A549 (cell line): ENCODE measurements at regions of chr6 and their contacts with region 1.

Region 1: DNA sequence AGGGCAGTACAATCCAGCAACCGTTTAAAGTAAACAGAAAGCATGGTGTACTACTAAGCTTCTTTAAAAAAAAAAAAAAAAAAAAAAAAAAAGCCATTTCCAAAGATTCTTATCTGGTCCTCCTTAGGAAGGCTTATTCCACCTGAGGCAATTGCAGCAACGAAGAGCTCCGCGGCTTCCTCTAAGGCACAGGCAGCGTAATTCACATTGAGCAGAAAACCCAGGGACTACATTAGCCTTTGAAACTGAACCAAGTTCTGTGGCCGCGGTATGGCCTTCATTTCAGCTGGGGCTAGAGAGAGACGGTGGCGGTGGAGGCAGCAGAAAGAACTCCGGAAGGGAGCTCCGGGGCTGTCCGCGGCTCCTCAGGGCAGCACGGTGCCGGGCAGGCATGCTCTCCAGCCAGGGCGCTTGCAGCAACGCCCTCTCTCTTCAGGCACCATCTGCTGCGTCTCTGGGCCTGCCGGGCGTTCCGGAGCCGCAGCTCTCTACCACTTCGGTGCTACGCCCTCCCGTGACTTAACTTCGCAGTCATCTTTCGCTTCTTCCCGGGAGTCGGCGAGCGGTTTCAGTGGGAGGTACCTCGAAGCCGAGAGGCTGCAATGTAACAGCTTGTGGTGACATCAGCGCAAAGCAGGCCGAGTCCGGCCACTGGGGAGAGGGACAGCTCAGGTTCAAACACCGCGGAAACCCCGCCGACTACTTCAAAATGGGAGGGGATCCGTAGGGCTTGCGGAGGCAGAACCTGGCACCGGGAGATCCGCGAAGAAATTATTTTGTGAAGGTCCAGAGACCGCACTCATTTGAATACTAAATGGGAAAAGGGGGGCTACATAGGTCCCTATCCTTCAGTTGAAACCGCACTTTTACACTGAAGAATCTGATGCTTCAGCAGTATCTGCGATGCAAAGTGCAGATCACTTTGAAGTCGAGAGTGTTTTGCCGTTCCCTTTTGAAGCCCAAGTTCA is 100.0 kb downstream of the DST start:
- DNase-seq: peak; percentile 57 to 93
- ATAC-seq: peak; percentile 99
- H3K4me3 ChIP-seq: peak overlapping the region; percentile 46
- H3K27ac ChIP-seq: peak overlapping the region; percentile 73 to 92
- H3K4me1 ChIP-seq: peaks cover 52% of the 10 kb centered on the region
- CTCF ChIP-seq: no peak
- EP300 ChIP-seq: no peak
- POLR2A ChIP-seq: peak; percentile 47
- RAD21 ChIP-seq: peak in 1 of 2 experiments; percentile 32; a peak in 2 of 5 replicates

Region 2: DNA sequence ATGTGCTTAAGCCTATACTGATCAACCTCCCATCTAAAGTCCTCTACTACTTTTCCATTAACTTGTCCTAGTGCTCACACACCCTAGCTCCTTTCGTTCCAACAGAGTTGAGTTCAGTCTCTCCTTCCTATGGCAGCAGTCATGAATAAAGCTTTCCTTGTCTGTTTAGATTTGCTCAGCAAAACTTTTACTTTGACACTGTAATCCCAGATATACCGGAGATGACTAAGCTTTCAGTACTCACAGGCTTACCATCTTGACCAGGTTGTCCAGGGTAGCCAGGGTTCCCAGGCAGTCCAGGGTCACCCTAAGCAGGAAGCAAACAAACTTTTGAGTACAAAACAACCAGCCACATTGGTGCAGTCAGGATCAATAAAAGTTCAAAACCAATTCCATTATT is 386.0 kb before region 1 on chr6:
- CTCF ChIA-PET with region 1: no interaction called
- POLR2A ChIA-PET with region 1: no interaction called
- DNase-seq: peak in 1 of 2 experiments; percentile 21
- ATAC-seq: no peak
- H3K4me3 ChIP-seq: no peak overlapping the region
- H3K27ac ChIP-seq: no peak overlapping the region
- H3K4me1 ChIP-seq: 0 out of 3 replicates have a peak, but pooled peaks cover 5% of the 10 kb centered on the region
- CTCF ChIP-seq: no peak
- EP300 ChIP-seq: no peak
- POLR2A ChIP-seq: no peak
- RAD21 ChIP-seq: no peak

Region 3: DNA sequence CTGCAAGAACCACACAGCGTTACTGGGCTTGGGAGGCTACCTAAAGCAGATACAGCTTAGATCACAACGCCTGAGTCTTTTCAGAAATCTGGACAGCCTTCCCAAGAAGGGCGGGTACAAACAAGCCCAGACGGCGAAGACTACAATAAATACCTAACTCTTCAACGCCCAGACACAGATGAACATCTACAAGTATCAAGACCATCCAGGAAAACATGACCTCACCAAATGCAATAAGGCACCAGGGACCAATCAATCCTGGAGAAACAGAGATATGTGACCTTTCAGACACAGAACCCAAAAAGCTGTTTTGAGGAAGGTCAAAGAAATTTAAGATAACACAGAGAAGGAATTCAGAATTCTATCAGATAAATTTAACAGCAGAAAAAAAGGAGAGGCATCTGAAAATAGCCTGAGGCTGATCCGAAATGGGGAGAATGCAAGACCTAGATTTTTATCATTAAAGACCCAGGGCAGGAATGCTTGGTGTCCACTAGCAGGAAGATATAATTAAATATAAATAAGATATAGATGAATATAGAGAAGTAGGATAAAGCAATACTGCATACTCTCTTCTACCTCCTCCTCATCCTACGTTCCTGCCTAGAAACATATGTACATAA is 163.5 kb before region 1 on chr6:
- CTCF ChIA-PET with region 1: no interaction called
- POLR2A ChIA-PET with region 1: no interaction called
- DNase-seq: no peak
- ATAC-seq: no peak
- H3K4me3 ChIP-seq: no peak overlapping the region
- H3K27ac ChIP-seq: no peak overlapping the region
- H3K4me1 ChIP-seq: no peaks in the 10 kb centered on the region
- CTCF ChIP-seq: no peak
- EP300 ChIP-seq: no peak
- POLR2A ChIP-seq: no peak
- RAD21 ChIP-seq: no peak

Region 4: DNA sequence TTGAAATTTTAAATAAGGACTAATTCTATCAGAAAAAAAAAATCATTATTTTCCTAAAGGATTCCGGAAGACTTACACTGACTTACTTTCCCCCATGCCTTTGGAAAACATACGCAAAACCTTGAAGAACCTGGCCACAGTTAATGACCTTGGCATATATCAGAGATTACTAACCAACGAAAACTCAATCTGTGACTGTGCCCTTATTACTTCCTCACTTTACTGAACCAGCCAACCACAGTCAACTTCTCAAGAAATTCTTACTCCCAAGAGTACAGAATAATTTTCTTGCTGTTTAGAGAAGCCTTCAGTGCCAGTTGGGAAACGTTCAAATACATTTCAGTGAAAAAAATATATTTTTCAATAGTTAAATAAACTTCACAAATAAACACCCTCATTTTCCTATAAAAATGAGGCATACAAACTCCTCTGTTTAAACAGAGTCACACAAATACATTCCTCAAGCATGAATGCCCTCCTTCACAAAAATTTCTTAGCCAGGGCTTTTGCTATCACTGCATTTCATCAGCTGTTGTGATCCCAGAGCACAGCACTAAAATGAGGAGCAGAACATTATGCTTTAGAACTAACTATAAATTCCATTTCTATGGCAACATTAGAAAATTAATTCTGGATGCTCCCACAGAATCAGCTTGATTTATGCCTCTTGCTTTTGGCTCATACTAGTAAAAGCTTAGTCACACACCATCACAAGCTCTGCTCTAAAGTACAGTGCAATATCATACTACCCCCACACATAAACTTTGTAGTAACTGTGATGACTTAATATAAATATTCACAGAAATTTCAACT is 17.6 kb before region 1 on chr6:
- CTCF ChIA-PET with region 1: interaction called, 5 read pairs
- POLR2A ChIA-PET with region 1: interaction called, 20 read pairs
- DNase-seq: peak in 1 of 2 experiments; percentile 9
- ATAC-seq: peak; percentile 82 to 83
- H3K4me3 ChIP-seq: no peak overlapping the region
- H3K27ac ChIP-seq: peak overlapping the region; percentile 56 to 70
- H3K4me1 ChIP-seq: peaks cover 51% of the 10 kb centered on the region
- CTCF ChIP-seq: no peak
- EP300 ChIP-seq: peak in 1 of 2 experiments; percentile 20; a peak in 1 of 5 replicates
- POLR2A ChIP-seq: no peak
- RAD21 ChIP-seq: no peak

Region 5: DNA sequence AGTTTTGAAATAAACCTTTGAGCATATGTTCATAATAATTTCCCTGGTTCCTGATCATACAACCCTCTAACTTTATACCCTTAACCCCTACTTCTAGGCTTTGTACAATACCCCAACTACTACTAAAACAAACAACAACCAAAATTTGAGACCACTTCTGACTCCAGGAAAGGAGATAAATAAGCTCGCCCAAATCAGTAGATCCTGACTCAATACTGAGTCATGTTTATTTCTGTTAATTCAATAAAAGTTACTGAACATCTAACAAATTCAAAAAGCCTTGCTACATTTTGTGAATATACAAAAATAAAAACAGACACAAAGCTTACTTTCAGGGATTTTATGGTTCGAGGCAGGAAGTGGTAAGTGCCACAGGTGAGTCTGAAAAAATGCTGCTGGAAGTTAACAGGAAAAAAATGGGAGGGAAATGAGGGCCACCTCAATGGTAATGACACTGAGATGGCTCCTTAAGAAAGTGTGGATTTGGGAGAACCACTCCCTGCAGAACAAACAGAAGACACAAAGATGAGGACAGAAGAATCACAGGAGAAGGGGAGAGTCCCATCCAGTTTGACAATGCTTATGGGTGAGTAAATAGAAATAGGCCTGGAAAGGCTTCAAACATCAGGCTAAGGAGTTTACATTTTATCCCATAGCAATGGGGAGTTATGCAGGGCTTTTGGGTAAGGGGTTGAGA is 36.7 kb after region 1 on chr6:
- CTCF ChIA-PET with region 1: no interaction called
- POLR2A ChIA-PET with region 1: interaction called, 15 read pairs
- DNase-seq: no peak
- ATAC-seq: no peak
- H3K4me3 ChIP-seq: no peak overlapping the region
- H3K27ac ChIP-seq: no peak overlapping the region
- H3K4me1 ChIP-seq: peaks cover 10% of the 10 kb centered on the region; the same call in 2 of the 3 replicates
- CTCF ChIP-seq: no peak
- EP300 ChIP-seq: no peak
- POLR2A ChIP-seq: no peak
- RAD21 ChIP-seq: no peak